ENCODE measurements at regions of chr1 and their contacts with region 1.

Region 1: DNA sequence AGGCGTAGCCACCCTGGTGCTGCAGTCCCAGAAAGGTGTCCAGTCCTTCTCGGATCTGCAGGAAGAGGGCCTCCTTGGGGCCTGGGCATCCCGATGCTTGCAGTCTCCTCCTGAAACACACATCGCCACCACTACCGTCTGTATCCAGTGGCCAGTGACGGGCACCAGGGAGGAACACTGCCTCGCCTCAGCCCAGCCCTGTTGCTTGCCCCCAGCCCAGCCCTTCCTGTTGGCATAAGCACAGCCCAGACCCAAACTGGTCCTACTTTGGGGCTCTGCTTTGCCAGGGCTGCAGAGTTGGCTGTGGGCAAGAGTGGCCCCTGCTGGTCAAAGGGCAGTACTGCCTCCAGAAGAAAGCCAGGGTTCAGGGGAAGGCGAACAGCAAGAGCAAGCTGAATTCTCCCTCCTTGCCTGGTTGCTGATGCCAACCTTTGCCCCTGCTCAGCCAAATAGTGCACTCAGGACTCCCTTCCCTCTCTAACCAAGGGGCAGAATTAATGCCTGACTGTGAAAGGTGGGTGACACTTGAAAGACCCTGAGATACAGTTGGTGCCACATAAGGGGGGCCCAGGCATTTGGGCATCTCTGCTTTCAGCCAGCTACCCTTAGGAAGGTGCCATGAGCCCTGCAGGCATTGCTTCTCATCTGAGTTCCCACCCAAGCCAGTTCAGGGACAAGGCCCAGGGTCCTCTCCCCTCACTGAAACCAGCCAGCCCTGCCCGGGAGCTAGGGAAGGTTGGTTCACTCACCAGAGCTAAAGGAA is 11.1 kb upstream of the ARHGEF2 start:
- DNase-seq: peak; percentile 83
- H3K4me3 Mint-ChIP-seq: no peak overlapping the region
- H3K27ac Mint-ChIP-seq: no peak overlapping the region
- H3K4me1 Mint-ChIP-seq: peaks cover 13% of the 10 kb centered on the region
- H3K27me3 Mint-ChIP-seq: no peaks in the 10 kb centered on the region
- CTCF ChIP-seq: peak; percentile 99

Region 2: GRCh38 chr1:155688324-155689080 is 300.9 kb before region 1 on chr1 and contains the start of gene YY1AP1:
- CTCF ChIA-PET with region 1: no interaction called
- intact Hi-C with region 1: no loop called
- DNase-seq: peak; percentile 93
- H3K4me3 Mint-ChIP-seq: peak within 1 kb of the TSS; percentile 100
- H3K27ac Mint-ChIP-seq: peak within 1 kb of the TSS; percentile 98
- H3K4me1 Mint-ChIP-seq: peaks cover 35% of the 10 kb centered on the region
- H3K27me3 Mint-ChIP-seq: no peaks in the 10 kb centered on the region
- CTCF ChIP-seq: no peak
- total RNA-seq, gene YY1AP1: 76.2 and 81.4 TPM in 2 replicates

Region 3: GRCh38 chr1:155938220-155938627 is 51.2 kb before region 1 on chr1:
- CTCF ChIA-PET with region 1: interaction called, 39 read pairs
- intact Hi-C with region 1: loop called (anchors 1 kb)
- DNase-seq: peak; percentile 58
- H3K4me3 Mint-ChIP-seq: no peak overlapping the region
- H3K27ac Mint-ChIP-seq: peak overlapping the region; percentile 69
- H3K4me1 Mint-ChIP-seq: peaks cover 35% of the 10 kb centered on the region
- H3K27me3 Mint-ChIP-seq: no peaks in the 10 kb centered on the region
- CTCF ChIP-seq: peak; percentile 24

Region 4: DNA sequence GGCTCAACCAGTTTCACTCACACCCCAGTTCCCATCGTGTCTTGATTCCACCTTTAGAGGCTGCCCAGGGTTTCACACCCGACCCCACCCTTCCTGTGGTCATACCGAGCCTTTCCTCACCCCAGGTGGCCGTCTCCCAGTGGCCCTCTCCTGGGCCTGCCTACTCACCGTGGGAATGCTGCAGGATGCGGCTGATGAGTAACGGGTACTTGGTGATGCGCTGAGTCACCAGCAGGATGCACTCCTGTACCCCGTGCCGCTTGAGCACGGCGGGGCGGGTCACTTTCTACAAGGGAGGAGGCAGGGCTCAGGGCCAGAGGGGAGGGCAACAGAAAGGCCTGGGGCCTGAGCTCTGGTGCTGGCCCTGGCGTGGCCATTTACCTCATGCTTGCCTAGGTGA is 27.5 kb before region 1 on chr1:
- CTCF ChIA-PET with region 1: interaction called, 6 read pairs
- intact Hi-C with region 1: loop called (anchors 2 kb)
- DNase-seq: peak; percentile 86
- H3K4me3 Mint-ChIP-seq: peak overlapping the region; percentile 66
- H3K27ac Mint-ChIP-seq: peak overlapping the region; percentile 98
- H3K4me1 Mint-ChIP-seq: peaks cover 34% of the 10 kb centered on the region
- H3K27me3 Mint-ChIP-seq: no peaks in the 10 kb centered on the region
- CTCF ChIP-seq: peak; percentile 59

Region 5: DNA sequence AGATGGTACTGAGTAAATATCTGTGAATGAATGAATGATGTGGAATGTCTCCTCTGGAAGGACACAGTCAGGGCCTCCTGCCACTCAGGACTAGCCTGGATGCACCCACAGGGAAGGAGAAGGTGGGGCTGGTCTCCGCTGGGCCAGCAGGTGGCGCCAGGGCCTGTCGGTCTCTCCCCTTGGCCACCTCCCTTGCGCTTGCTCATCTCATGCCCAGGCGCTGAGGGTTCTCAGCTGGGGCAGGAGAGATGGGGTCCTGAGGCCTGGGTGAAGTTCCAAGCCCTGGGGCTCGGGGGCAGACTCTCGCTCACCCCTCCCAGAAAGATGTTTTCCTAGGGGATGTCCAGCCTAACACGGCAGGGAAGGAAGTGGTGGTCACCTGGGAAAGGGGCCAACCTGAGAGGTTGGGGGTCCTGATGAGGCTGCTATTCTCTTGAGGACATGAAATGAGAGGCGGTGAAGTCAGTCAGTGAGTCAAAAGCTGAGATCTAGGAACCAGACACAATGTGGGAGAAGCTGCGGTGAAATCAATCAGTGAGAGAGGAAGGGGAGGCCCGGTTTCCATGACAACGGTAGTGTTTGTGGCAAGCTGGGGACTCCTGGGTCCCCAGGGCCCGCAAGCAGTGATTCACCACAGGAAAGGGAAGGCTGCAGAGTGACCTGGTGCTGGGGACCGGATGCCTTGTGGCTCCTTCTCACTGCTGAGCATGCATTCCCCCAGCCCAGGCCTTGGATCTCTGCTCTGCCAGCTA is 107.4 kb after region 1 on chr1:
- CTCF ChIA-PET with region 1: no interaction called
- intact Hi-C with region 1: no loop called
- DNase-seq: peak; percentile 97
- H3K4me3 Mint-ChIP-seq: peak overlapping the region; percentile 27
- H3K27ac Mint-ChIP-seq: peak overlapping the region; percentile 98
- H3K4me1 Mint-ChIP-seq: peaks cover 61% of the 10 kb centered on the region
- H3K27me3 Mint-ChIP-seq: no peaks in the 10 kb centered on the region
- CTCF ChIP-seq: peak; percentile 93

Region 6: GRCh38 chr1:156540791-156541383 is 551.5 kb after region 1 on chr1:
- CTCF ChIA-PET with region 1: no interaction called
- intact Hi-C with region 1: no loop called
- DNase-seq: no peak
- H3K4me3 Mint-ChIP-seq: no peak overlapping the region
- H3K27ac Mint-ChIP-seq: no peak overlapping the region
- H3K4me1 Mint-ChIP-seq: peaks cover 22% of the 10 kb centered on the region
- H3K27me3 Mint-ChIP-seq: no peaks in the 10 kb centered on the region
- CTCF ChIP-seq: no peak

Measured in Calu3 (cell line).